ENCODE measurements at regions of chr3 and their contacts with region 1.

Region 1: GRCh38 chr3:50235716-50236496 is at the start of gene GNAI2:
- DNase-seq: peak; percentile 99
- ATAC-seq: peak; percentile 88
- H3K4me3 ChIP-seq: peak within 1 kb of the TSS; percentile 70 to 100 (median 95)
- H3K4me3 Mint-ChIP-seq: peak within 1 kb of the TSS; percentile 97
- H3K27ac ChIP-seq: peak within 1 kb of the TSS; percentile 65 to 91
- H3K27ac Mint-ChIP-seq: peak within 1 kb of the TSS; percentile 97
- H3K4me1 ChIP-seq: peaks cover 39 to 46% of the 10 kb centered on the region in 2 donors
- H3K4me1 Mint-ChIP-seq: peaks cover 54% of the 10 kb centered on the region
- H3K27me3 ChIP-seq: no peaks in the 10 kb centered on the region
- H3K27me3 Mint-ChIP-seq: no peaks in the 10 kb centered on the region
- CTCF ChIP-seq: no peak
- total RNA-seq, gene GNAI2: 295 and 302 TPM in 2 replicates

Region 2: DNA sequence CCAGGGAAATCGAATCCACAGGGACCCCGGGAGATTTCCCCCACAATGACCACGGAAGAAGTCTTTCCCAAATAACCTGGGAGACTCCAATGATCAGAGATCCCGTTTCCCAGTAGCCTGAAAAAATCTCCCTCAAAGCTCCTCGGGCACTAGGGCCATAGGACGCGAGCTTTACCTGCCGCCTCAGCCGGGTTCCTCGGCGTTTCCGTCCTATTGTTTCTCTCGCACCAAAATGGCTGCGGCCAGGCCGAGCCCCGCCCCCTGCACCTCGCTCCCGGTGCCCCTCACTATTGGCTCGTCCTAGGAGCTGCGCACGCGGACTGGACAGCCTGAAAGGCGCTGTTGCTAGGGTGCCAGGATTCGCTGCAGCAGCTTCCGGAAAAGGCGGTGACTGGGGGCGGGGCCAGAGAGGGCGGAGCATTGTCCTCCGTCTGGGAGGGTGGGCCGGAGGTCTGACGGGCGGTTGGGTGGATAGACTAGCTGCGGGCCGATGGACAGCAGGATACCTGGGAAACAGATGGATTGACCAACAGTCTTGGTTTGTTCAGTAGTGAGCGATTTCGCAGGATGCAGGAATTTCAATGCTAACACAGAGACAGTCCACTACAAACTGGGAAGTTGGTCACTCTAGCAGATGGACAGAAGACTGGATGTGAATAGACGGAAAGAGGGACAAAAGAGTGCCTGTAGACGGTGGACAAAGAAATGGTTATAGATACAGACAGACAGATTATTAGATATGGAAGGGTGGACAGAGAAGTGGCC is 1518.7 kb before region 1 on chr3 and contains the start of gene IP6K2:
- CTCF ChIA-PET with region 1: no interaction called
- POLR2A ChIA-PET with region 1: no interaction called
- intact Hi-C with region 1: loop called (anchors 5 kb)
- DNase-seq: peak; percentile 97
- ATAC-seq: peak; percentile 99
- H3K4me3 ChIP-seq: peak within 1 kb of the TSS; percentile 90 to 99 (median 95)
- H3K4me3 Mint-ChIP-seq: peak within 1 kb of the TSS; percentile 98
- H3K27ac ChIP-seq: peak within 1 kb of the TSS; percentile 74 to 77
- H3K27ac Mint-ChIP-seq: peak within 1 kb of the TSS; percentile 93
- H3K4me1 ChIP-seq: peaks cover 18 to 20% of the 10 kb centered on the region in 2 donors
- H3K4me1 Mint-ChIP-seq: peaks cover 33% of the 10 kb centered on the region
- H3K27me3 ChIP-seq: no peaks in the 10 kb centered on the region
- H3K27me3 Mint-ChIP-seq: no peaks in the 10 kb centered on the region
- CTCF ChIP-seq: no peak
- total RNA-seq, gene IP6K2: 138 and 140 TPM in 2 replicates

Region 3: GRCh38 chr3:50245831-50246516 is 10.1 kb after region 1 on chr3:
- CTCF ChIA-PET with region 1: interaction called, 596 read pairs
- POLR2A ChIA-PET with region 1: interaction called, 9 read pairs
- intact Hi-C with region 1: loop called (anchors 1 kb)
- DNase-seq: peak; percentile 92
- ATAC-seq: peak; percentile 66
- H3K4me3 ChIP-seq: peak overlapping the region in 4 of 5 experiments; percentile 37 to 50 (median 40)
- H3K4me3 Mint-ChIP-seq: peak overlapping the region; percentile 82
- H3K27ac ChIP-seq: peak overlapping the region; percentile 76 to 86
- H3K27ac Mint-ChIP-seq: peak overlapping the region; percentile 89
- H3K4me1 ChIP-seq: peaks cover 66 to 94% of the 10 kb centered on the region in 2 donors
- H3K4me1 Mint-ChIP-seq: peaks cover 82% of the 10 kb centered on the region
- H3K27me3 ChIP-seq: no peaks in the 10 kb centered on the region
- H3K27me3 Mint-ChIP-seq: no peaks in the 10 kb centered on the region
- CTCF ChIP-seq: peak; percentile 96

Region 4: DNA sequence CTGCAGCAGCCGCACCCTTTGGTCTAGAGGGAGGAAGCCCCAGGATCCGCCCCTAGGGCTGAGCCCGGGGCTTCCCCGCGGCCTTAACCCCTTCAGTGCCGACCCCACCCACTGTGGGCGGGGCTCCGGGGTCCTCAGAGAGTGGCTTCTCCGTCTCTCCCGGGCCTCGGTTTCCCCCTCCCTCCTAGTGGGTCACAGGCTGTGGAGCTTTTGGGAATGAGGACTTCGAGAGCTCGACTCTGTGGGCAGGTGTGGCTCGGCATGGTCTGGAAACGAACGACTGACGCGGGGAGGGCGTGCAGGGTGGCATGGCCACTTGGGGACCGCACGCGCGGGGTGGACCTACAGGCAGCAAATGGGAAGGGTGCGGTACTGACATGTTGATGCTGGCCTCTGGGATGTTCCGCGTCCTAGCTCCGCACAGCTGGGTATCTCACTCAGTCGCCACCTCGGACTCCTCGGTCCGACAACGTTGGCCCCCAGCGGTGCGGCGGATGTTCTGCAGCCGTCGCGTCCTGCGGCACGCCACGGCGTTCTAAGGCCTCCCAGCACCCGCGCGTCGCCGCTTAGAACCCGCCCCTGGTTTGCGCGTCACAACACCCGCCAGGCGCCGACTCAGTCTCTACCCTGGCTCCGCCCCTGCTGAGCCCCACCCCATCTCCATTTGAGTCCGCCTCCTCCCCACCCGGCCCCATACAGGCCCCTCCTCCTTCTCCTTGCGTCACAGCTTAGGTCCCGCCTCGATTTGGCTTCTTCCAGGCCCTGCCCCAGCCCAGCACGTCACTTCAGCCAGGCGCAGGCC is 63.1 kb after region 1 on chr3 and contains the starts of genes HYAL3 and NAA80:
- CTCF ChIA-PET with region 1: interaction called, 5 read pairs
- POLR2A ChIA-PET with region 1: interaction called, 4 read pairs
- intact Hi-C with region 1: loop called (anchors 2 kb)
- DNase-seq: peak; percentile 100
- ATAC-seq: peak; percentile 91
- H3K4me3 ChIP-seq: peak within 1 kb of the TSS; percentile 68 to 89 (median 88)
- H3K4me3 Mint-ChIP-seq: peak within 1 kb of the TSS; percentile 100
- H3K27ac ChIP-seq: peak within 1 kb of the TSS; percentile 77 to 84
- H3K27ac Mint-ChIP-seq: peak within 1 kb of the TSS; percentile 100
- H3K4me1 ChIP-seq: peaks cover 18 to 24% of the 10 kb centered on the region in 2 donors
- H3K4me1 Mint-ChIP-seq: peaks cover 33% of the 10 kb centered on the region
- H3K27me3 ChIP-seq: no peaks in the 10 kb centered on the region
- H3K27me3 Mint-ChIP-seq: no peaks in the 10 kb centered on the region
- CTCF ChIP-seq: peak; percentile 65
- total RNA-seq, gene HYAL3: 1.9 and 3.7 TPM in 2 replicates
- total RNA-seq, gene NAA80: 33.8 and 37.8 TPM in 2 replicates

Region 5: DNA sequence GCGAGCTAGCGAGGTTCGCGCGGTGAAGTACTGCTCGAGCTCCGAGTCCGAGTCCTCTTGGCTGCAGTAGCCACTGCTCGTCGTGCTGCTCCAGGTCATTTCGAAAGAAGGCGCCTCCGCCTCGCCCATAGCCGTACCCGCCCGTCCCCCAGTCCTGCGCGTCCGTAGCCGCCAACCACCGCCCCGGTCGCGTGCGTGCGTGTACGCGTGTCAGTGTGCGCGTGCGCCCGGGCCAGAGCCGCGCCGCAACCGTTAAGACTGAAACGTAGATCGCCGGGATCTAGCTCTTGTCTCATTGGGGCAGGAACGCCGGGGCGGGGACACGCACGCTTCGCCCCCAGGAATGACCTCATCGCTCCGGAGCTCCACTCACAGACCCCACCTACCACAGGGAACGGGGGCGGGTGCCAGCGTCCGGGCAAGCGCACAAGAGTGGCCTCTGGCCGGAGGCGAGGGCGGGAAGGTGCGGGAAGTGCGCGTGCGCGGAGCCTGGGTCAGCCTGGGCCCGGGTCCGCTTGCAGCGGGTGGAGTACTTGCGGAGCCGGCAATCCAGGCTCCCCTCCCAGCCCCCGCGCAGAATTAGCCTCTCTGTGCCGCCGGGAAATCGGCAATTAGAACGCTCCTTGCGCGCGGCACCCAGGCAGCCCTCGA is 101.4 kb after region 1 on chr3:
- CTCF ChIA-PET with region 1: no interaction called
- POLR2A ChIA-PET with region 1: interaction called, 8 read pairs
- intact Hi-C with region 1: loop called (anchors 5 kb)
- DNase-seq: peak; percentile 97
- ATAC-seq: peak; percentile 84
- H3K4me3 ChIP-seq: peak overlapping the region; percentile 39 to 86 (median 68)
- H3K4me3 Mint-ChIP-seq: peak overlapping the region; percentile 96
- H3K27ac ChIP-seq: peak overlapping the region; percentile 97 to 98
- H3K27ac Mint-ChIP-seq: peak overlapping the region; percentile 99
- H3K4me1 ChIP-seq: peaks cover 37 to 74% of the 10 kb centered on the region in 2 donors
- H3K4me1 Mint-ChIP-seq: peaks cover 55% of the 10 kb centered on the region
- H3K27me3 ChIP-seq: no peaks in the 10 kb centered on the region
- H3K27me3 Mint-ChIP-seq: no peaks in the 10 kb centered on the region
- CTCF ChIP-seq: no peak

Measured in B cell (primary cell).